ENCODE measurements at regions of chr4 and their contacts with region 1.

Region 1: DNA sequence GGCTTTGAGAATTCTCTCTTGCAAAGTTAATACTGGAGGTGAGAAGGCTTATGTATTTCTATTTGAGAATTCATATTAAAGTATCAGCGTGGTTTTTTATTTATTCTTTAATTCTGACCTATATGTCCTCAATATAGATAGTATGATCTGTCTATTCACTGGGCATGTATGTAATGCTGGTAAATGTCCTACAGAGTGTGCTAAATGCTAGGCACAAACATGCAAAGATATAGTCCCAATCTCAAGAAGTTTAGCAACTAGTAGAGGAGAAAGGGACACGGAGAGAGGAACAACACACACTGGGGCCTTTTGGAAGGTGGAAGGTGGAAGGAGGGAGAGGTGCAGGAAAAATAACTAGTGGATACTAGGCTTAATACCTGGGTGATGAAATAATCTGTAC is 11.0 kb upstream of the BMPR1B start:
- DNase-seq: peak; percentile 31
- H3K4me3 Mint-ChIP-seq: no peak overlapping the region
- H3K27ac Mint-ChIP-seq: no peak overlapping the region
- H3K4me1 Mint-ChIP-seq: peaks cover 4% of the 10 kb centered on the region
- H3K27me3 Mint-ChIP-seq: no peaks in the 10 kb centered on the region
- CTCF ChIP-seq: peak; percentile 38

Region 2: DNA sequence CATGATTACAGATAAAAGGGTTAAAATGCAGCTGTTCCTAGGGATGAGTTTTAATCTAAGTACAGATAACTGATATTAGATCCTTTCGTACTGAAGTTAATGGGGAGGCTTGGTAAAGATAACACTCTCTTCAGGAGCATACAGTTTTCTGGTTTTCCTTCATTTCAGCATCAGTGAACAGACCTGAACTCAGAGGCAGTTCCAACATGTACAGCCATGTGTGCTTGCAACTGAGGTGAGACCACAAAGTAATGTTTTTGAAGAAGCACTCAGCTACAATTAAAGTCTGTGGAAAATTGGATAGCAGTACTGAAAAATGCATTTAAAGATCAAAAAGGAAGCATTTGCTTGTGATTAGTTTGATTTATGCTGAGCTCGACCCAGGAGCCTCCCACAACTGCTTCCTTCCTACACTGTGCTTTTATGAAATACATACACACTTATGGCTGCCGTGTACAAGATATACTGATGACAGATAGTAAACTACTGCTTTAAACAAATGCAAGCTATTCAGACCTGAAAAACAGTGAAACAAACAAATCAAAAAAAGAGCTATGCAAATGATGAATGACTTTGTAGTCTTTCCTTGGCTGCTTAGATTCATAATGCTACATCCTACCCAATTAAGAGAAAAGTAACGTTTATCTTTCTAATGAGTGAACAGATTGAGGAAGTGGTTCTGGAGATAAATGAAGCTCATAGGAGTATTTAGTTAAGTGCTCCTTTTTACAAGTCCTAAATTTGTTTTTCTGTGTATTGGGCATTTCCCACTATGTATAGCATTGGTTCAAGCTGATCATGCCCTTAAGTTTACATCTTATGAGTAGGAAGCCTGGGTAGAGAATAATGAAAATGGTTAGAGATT is 226.6 kb before region 1 on chr4:
- CTCF ChIA-PET with region 1: no interaction called
- POLR2A ChIA-PET with region 1: no interaction called
- intact Hi-C with region 1: no loop called
- DNase-seq: no peak
- H3K4me3 Mint-ChIP-seq: no peak overlapping the region
- H3K27ac Mint-ChIP-seq: peak overlapping the region; percentile 86
- H3K4me1 Mint-ChIP-seq: peaks cover 33% of the 10 kb centered on the region
- H3K27me3 Mint-ChIP-seq: no peaks in the 10 kb centered on the region
- CTCF ChIP-seq: no peak

Region 3: GRCh38 chr4:94732358-94732698 is 14.4 kb before region 1 on chr4:
- CTCF ChIA-PET with region 1: no interaction called
- POLR2A ChIA-PET with region 1: no interaction called
- intact Hi-C with region 1: no loop called
- DNase-seq: no peak
- H3K4me3 Mint-ChIP-seq: no peak overlapping the region
- H3K27ac Mint-ChIP-seq: no peak overlapping the region
- H3K4me1 Mint-ChIP-seq: no peaks in the 10 kb centered on the region
- H3K27me3 Mint-ChIP-seq: no peaks in the 10 kb centered on the region
- CTCF ChIP-seq: no peak

Region 4: DNA sequence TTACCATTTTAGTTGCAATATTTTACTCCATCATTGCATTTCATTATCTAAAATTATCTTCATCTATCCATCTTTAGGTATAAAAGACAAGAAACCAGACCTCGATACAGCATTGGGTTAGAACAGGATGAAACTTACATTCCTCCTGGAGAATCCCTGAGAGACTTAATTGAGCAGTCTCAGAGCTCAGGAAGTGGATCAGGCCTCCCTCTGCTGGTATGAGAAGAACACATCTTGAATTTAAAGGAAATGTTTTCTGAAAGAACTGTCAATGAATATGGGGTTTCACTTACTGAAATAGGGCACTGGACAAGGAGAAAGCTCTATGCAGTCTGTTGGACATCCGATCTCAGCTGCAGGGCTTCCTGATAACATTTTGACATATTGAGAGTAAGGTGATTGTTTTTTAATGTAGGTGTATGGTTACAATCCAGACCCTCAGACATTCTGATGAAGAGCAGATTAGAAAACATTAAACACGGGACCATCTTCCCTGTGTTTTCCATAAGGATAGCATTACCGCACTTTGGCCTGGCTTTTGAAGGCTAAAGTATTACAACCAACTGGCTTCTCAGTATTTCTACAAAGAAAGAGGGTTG is 378.3 kb after region 1 on chr4:
- CTCF ChIA-PET with region 1: interaction called, 3 read pairs
- POLR2A ChIA-PET with region 1: no interaction called
- intact Hi-C with region 1: loop called (anchors 10 kb)
- DNase-seq: peak; percentile 71
- H3K4me3 Mint-ChIP-seq: no peak overlapping the region
- H3K27ac Mint-ChIP-seq: no peak overlapping the region
- H3K4me1 Mint-ChIP-seq: peaks cover 19% of the 10 kb centered on the region
- H3K27me3 Mint-ChIP-seq: no peaks in the 10 kb centered on the region
- CTCF ChIP-seq: peak; percentile 48

Measured in MCF 10A (cell line).